ENCODE measurements at regions of chr12 and their contacts with region 1.

Region 1: DNA sequence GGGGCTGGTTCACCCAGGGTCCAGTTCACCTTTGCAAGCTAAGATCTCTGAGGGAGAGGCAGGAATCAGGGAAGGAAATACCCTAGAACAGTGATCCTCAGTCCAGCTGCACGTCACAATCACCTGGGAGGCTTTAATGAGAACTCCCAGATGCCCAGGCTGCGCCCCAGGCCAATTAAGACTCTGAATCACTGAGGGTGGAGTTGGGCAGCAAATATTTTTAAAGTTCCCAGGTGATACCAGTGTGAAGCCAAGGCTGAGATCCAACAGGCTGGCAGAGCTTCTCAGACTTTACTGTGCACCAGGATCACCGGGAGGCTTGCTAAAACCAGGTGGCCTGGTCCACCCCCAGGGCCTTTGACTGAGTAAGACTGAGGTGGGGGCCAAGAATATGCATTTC is 23.8 kb downstream of the MYL2 start:
- DNase-seq: peak; percentile 88
- H3K4me3 Mint-ChIP-seq: no peak overlapping the region
- H3K27ac Mint-ChIP-seq: peak overlapping the region; percentile 22
- H3K4me1 Mint-ChIP-seq: peaks cover 16% of the 10 kb centered on the region
- H3K27me3 Mint-ChIP-seq: no peaks in the 10 kb centered on the region
- CTCF ChIP-seq: no peak

Region 2: GRCh38 chr12:110615171-110615570 is 281.4 kb before region 1 on chr12:
- CTCF ChIA-PET with region 1: no interaction called
- POLR2A ChIA-PET with region 1: no interaction called
- intact Hi-C with region 1: no loop called
- DNase-seq: no peak
- H3K4me3 Mint-ChIP-seq: peak overlapping the region; percentile 78
- H3K27ac Mint-ChIP-seq: no peak overlapping the region
- H3K4me1 Mint-ChIP-seq: no peaks in the 10 kb centered on the region
- H3K27me3 Mint-ChIP-seq: no peaks in the 10 kb centered on the region
- CTCF ChIP-seq: no peak

Region 3: GRCh38 chr12:110913119-110914056 is 16.8 kb after region 1 on chr12:
- CTCF ChIA-PET with region 1: interaction called, 5 read pairs
- POLR2A ChIA-PET with region 1: interaction called, 22 read pairs
- intact Hi-C with region 1: no loop called
- DNase-seq: no peak
- H3K4me3 Mint-ChIP-seq: no peak overlapping the region
- H3K27ac Mint-ChIP-seq: no peak overlapping the region
- H3K4me1 Mint-ChIP-seq: peaks cover 21% of the 10 kb centered on the region
- H3K27me3 Mint-ChIP-seq: no peaks in the 10 kb centered on the region
- CTCF ChIP-seq: no peak

Region 4: GRCh38 chr12:110932046-110932445 is 35.5 kb after region 1 on chr12:
- CTCF ChIA-PET with region 1: interaction called, 12 read pairs
- POLR2A ChIA-PET with region 1: interaction called, 14 read pairs
- intact Hi-C with region 1: loop called (anchors 1 kb)
- DNase-seq: no peak
- H3K4me3 Mint-ChIP-seq: no peak overlapping the region
- H3K27ac Mint-ChIP-seq: no peak overlapping the region
- H3K4me1 Mint-ChIP-seq: peaks cover 18% of the 10 kb centered on the region
- H3K27me3 Mint-ChIP-seq: no peaks in the 10 kb centered on the region
- CTCF ChIP-seq: no peak

Region 5: GRCh38 chr12:111006621-111007020 is 110.1 kb after region 1 on chr12:
- CTCF ChIA-PET with region 1: no interaction called
- POLR2A ChIA-PET with region 1: no interaction called
- intact Hi-C with region 1: no loop called
- DNase-seq: no peak
- H3K4me3 Mint-ChIP-seq: no peak overlapping the region
- H3K27ac Mint-ChIP-seq: no peak overlapping the region
- H3K4me1 Mint-ChIP-seq: no peaks in the 10 kb centered on the region
- H3K27me3 Mint-ChIP-seq: peaks cover 48% of the 10 kb centered on the region
- CTCF ChIP-seq: no peak

Region 6: GRCh38 chr12:111024205-111024801 is 127.7 kb after region 1 on chr12:
- CTCF ChIA-PET with region 1: interaction called, 11 read pairs
- POLR2A ChIA-PET with region 1: no interaction called
- intact Hi-C with region 1: loop called (anchors 2 kb)
- DNase-seq: peak; percentile 69
- H3K4me3 Mint-ChIP-seq: no peak overlapping the region
- H3K27ac Mint-ChIP-seq: no peak overlapping the region
- H3K4me1 Mint-ChIP-seq: no peaks in the 10 kb centered on the region
- H3K27me3 Mint-ChIP-seq: peaks cover 57% of the 10 kb centered on the region
- CTCF ChIP-seq: peak; percentile 88

Region 7: DNA sequence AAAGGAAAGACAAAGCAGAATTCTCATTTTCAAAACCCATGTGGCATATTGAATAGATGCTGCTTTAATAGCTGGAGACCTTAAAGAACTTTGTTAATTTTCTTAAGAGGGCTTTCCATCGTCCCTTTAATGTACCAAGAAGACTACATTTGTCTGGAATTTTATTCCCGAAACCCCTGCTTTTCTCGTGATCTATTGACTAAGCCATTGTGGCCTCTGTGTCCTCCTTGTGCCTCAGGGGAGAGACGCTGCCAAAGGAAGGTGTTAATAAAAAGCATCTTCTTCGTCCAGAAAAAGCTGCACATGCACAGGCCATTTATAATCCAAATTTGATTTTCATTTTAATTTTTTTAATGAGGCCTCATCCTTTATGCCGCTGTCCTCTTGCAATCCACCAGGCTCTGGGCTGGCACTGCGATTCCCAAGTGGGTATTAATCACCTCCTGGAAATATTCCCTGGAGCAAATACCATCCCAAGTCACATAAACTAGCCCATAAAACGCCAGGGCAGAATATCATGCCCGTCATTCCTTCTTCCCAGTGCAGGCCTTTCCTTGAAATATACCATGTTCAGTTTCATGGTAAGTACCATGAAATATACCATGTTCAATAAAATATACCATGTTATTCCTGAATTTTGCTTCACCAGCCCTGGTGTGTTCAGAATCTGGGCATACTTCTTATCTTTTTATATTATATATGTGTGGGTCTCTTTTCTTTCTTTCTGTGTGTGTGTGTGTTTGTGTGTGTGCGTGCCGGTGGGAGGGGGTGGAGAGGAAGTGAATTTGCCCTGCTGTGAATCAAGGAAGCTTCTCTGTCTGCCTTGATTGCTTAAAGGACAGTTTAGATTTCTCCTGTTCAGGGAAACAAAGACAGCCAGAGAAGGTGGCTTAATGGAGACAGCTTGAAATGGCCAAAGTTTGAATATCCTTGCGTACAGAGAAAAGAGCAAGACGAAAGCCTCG is 324.8 kb after region 1 on chr12:
- CTCF ChIA-PET with region 1: no interaction called
- POLR2A ChIA-PET with region 1: no interaction called
- intact Hi-C with region 1: no loop called
- DNase-seq: no peak
- H3K4me3 Mint-ChIP-seq: no peak overlapping the region
- H3K27ac Mint-ChIP-seq: no peak overlapping the region
- H3K4me1 Mint-ChIP-seq: no peaks in the 10 kb centered on the region
- H3K27me3 Mint-ChIP-seq: peaks cover 32% of the 10 kb centered on the region
- CTCF ChIP-seq: no peak

Region 8: GRCh38 chr12:111274777-111275176 is 378.2 kb after region 1 on chr12:
- CTCF ChIA-PET with region 1: interaction called, 12 read pairs
- POLR2A ChIA-PET with region 1: interaction called, 6 read pairs
- intact Hi-C with region 1: no loop called
- DNase-seq: peak; percentile 14
- H3K4me3 Mint-ChIP-seq: no peak overlapping the region
- H3K27ac Mint-ChIP-seq: no peak overlapping the region
- H3K4me1 Mint-ChIP-seq: peaks cover 16% of the 10 kb centered on the region
- H3K27me3 Mint-ChIP-seq: peaks cover 34% of the 10 kb centered on the region
- CTCF ChIP-seq: peak; percentile 27

Region 9: DNA sequence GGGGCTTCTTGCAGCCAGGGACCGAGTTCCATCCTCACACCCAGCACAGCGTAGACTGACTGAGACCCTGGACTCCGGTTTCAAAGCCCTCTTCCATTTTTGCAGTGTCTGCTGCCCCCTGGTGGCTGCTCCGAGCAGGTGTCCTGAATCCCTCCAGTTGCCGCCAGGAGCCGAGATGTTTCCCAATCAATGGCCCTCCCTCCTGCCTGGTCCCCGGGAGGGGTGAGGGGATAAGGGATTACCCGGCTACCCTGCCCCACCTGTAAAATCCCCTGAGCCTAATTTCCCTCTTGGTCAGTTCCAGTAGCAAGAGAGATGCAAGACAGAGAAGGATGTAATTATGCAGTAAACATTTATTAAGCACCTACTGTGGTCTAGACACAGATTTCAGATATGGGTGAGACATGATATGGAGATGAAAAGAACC is 417.3 kb after region 1 on chr12:
- CTCF ChIA-PET with region 1: interaction called, 56 read pairs
- POLR2A ChIA-PET with region 1: interaction called, 5 read pairs
- intact Hi-C with region 1: loop called (anchors 1 kb)
- DNase-seq: peak; percentile 75
- H3K4me3 Mint-ChIP-seq: no peak overlapping the region
- H3K27ac Mint-ChIP-seq: no peak overlapping the region
- H3K4me1 Mint-ChIP-seq: peaks cover 6% of the 10 kb centered on the region
- H3K27me3 Mint-ChIP-seq: no peaks in the 10 kb centered on the region
- CTCF ChIP-seq: peak; percentile 91